Cardiac septum (tissue), 1 donor: ENCODE measurements at regions of chr2 and their contacts with region 1.

Region 1: GRCh38 chr2:205925373-205926337 is 160.3 kb downstream of the INO80D start:
- DNase-seq: peak; percentile 92

Region 2: DNA sequence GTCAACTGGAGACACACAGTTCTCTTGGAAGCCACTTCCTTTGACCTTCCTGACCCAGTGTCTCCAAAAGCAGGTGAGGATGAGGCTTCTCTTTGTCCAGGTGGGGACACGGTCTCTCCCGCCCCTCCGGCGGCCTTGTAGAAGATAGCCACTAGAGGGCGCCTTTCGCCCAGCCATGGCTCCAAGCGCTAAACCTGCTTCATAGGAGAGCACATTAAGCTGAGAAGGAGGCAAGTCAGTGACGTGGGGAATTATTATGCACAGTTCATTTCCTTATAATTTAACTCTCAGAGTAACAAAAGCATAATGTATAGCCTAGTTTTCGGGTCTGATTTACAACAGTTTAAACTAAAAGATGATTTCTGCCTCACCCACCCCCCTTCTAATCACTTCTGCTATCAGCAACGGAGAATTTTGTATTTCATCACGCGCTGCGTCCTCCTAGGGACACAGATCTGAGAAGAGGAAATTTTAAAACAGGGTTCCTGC is 1780.3 kb before region 1 on chr2:
- intact Hi-C with region 1: loop called (anchors 10 kb)
- DNase-seq: peak; percentile 83

Region 3: DNA sequence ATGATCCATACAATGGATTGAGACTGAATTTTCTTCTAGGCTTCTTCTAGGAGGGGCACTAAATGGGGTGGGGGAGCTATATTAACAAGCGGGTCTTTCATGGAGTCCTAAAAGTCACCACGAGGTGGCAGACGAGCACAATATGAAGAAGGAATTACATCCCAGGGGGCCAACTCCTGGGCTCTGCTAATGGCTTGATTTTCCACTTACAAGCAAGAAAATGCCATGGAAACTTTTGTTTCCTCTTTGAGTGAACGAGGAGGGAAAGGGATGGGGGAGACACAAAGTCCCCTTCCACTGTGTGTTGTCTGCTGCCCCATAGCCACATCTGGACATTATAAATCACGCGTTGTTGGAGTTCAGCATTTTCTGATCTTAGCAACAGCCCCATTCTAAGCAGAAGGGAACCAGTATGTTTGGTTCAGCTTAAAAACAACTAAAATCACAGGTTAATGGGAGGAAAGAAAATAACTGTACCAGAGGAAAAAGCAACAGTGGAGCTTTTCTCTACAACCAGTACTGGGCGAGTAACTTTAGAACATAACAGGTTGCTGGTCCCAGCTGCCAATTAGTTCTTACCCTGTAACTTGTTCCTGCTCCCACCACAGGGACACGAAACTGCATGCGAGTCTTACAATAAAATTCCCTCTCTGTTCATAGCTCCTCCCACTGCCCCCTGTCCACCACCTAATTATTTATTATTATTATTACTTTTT is 1665.3 kb before region 1 on chr2:
- intact Hi-C with region 1: loop called (anchors 10 kb)
- DNase-seq: no peak

Region 4: DNA sequence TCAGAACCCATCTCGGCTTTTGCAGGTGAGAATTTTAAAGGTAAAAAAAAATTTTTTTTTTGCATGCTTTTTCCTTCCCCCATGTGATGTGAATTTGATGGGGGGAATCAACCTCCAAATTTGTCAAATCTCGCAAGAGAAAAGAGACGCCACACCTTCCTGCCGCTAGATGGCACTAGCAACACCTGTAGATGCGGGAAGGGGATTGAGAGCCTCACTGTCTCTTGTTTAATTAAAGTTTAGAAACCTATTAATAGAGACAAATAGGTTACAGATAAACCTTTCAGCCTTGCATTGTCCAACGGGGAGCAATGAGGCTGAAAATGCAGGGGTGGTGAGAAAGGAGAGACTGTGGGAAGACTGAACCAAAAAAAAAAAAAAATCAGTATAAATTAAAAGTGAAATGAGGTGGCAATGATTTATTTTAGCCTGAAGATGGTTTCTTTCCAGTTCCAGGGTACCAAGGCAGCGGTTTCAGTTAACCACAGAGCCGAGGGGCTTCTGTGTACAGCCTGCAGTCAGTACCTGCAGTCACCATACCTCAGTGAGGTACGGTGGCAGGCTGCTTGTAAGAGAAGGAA is 158.8 kb before region 1 on chr2:
- intact Hi-C with region 1: loop called (anchors 2 kb)
- DNase-seq: no peak